Activated naive CD4-positive, alpha-beta T cell treated with anti-CD3 and anti-CD28 coated beads, Interleukin-2, amount 10 ng/mL, durations not matched to agents 7 days and 5 days (primary cell): ENCODE measurements at regions of chr16 and their contacts with region 1.

Region 1: DNA sequence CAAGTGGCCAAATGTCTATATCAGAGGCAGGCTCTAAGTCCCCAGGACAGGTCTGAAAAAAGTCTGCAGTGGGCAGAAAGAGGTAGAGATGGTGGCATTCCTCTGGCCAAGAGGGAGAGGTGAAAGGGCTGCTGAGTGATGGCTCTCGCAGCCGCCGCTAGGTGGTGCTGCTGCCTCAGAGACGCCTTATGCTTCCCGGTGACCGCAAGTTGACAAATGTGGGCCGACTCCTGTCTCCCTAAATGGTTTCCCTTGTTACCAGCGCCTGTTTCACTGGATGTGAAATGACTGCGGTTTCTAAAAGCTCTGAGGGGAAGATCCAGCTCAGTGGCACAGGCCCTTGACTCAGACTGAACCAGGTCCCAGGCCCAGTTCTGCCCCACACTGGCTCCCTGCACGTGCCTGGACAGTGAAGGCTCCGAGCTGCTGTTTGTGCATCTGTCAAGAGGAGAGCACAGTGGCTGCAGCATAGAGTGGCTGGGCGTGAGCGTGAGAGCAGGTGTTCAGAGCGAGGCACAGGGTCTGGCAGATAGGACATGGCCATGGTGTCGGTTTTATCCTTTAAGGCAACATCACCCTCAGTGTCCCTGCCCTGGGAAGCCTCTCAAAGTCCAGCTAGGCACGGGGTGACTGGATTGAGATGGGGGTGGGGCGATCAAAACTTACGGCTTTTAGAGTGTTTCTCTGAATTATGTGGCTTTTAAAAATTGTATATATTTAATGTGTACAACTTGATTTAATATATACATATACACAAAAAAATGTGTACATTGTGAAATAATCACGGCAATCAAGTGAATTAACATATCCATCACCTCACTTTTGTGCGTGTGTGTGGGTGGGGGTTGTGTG is 19.9 kb downstream of the CLEC16A start:
- DNase-seq: peak; percentile 89
- H3K4me3 Mint-ChIP-seq: peak overlapping the region; percentile 36
- H3K27ac Mint-ChIP-seq: peak overlapping the region; percentile 90
- H3K4me1 Mint-ChIP-seq: peaks cover 69% of the 10 kb centered on the region
- H3K27me3 Mint-ChIP-seq: no peaks in the 10 kb centered on the region

Region 2: DNA sequence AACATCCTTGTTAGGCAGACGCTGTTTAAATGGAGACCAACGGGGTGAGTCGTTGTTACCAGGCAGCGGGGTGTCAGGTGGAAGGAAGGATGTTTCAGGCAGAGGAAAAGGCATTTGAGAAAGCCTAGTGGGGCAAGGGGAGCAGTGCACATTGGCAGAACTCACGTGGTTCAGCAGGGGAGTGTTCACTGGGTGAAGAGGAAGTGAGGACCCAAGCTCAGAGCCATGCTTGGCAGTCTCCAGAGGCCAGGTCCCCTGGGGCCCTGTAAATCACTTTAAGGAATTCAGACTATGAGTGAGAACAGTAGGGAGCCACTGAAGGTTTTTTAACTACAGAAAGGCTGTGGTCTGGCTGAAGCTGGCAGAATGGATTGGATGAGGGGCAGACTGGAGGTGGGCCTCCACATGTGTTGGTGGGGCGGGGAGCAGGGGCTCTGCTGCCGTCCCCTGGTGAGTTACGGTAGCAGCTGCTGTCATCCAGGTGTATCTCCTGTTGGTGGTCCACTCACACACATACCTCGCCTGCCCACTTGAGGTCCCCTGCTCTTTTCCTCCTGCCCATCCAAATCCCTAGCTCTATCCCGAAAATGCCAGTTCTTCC is 14.8 kb before region 1 on chr16:
- CTCF ChIA-PET with region 1: interaction called, 37 read pairs
- DNase-seq: peak; percentile 80
- H3K4me3 Mint-ChIP-seq: no peak overlapping the region
- H3K27ac Mint-ChIP-seq: peak overlapping the region; percentile 15
- H3K4me1 Mint-ChIP-seq: peaks cover 63% of the 10 kb centered on the region
- H3K27me3 Mint-ChIP-seq: no peaks in the 10 kb centered on the region

Region 3: DNA sequence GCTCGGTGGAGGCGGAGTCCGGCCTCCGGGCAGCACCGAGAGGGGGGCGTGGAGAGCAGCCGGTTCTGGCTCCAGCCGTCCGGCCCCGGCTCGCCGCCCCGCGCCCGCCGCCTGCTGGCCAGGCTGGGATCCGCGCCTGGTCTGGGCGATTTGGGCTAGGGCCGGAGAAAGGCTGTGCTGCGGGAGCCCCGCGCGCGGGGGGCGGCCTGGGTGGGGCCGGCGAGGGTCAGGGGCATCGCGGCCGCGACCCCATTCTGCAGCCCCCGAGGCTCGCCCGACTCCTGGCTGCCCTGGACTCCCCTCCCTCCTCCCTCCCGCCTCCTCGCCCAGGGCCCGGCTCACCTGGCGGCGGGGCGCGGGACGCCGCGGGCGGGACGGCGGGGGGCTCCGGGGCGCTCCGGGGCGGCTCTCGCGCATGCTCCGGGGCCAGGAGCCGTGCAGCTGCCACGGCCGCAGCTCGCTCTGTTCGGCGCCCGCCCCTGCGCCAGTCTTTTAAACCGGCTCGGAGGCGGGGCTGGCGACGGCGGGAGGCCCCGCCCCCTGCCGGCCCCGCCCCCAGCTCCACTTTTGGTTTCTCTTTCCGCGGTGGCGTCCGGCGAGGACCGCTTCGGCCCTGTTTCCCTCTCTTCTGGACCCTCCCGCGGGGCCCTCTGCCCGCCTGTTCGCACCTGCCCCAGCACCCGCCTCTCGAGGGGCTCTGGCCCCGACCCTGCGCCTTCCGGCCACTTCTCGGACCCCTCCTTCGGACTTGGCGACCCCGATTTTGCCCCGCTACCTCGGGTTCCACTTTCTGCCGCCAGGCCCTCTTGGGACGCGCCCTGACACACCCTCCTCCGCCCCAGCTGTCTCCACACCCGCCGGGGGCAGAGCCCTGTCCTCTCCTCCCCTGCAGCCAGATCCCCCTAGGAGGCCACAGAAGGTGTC is 291.7 kb after region 1 on chr16 and contains the start of gene SOCS1:
- CTCF ChIA-PET with region 1: interaction called, 95 read pairs
- DNase-seq: peak; percentile 89
- H3K4me3 Mint-ChIP-seq: peak within 1 kb of the TSS; percentile 98
- H3K27ac Mint-ChIP-seq: peak within 1 kb of the TSS; percentile 94
- H3K4me1 Mint-ChIP-seq: peaks cover 59% of the 10 kb centered on the region
- H3K27me3 Mint-ChIP-seq: peaks cover 10% of the 10 kb centered on the region

Region 4: DNA sequence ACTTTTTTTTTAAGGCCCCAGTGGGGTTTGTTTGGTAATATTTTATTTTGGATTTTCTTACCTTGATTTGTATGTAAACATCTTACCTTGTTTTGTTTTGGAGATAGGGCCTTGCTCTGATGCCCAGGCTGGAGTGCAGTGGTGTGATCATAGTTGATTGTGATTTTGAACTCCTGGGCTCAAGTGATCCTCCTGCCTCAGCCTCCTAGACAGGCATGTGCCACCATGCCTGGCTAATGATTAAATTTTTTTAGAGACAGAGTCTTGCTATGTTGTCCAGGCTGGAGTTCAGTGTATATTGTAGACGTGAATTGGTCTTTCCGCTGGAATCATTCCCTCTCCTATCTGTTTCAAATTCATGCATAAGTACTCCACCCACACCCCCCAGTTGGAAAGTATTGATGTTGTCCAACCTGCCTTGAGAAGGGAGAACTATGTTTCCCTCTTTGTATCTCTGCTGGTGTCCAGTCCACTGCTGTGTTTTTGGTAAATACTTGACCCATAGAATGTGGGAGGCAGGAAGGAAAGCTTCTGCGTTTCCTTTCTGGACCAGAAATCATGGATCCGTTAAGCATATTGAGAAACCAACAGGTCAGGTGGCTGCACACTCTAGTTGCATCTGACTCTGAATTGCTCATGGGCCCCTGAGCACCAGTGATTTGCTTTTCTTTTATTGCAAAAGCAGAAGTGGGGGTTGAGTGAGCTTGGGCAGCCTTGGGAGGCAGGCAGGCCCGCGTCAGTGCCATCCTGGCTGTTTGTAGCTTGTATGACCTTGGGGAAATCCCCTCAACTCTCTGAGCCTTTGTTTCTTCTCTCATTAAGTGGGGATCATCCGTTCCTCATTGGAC is 406.0 kb after region 1 on chr16:
- CTCF ChIA-PET with region 1: interaction called, 29 read pairs
- DNase-seq: peak; percentile 34
- H3K4me3 Mint-ChIP-seq: no peak overlapping the region
- H3K27ac Mint-ChIP-seq: no peak overlapping the region
- H3K4me1 Mint-ChIP-seq: peaks cover 22% of the 10 kb centered on the region
- H3K27me3 Mint-ChIP-seq: peaks cover 20% of the 10 kb centered on the region

Region 5: GRCh38 chr16:11530171-11530940 is 566.1 kb after region 1 on chr16:
- CTCF ChIA-PET with region 1: interaction called, 28 read pairs
- DNase-seq: no peak
- H3K4me3 Mint-ChIP-seq: no peak overlapping the region
- H3K27ac Mint-ChIP-seq: no peak overlapping the region
- H3K4me1 Mint-ChIP-seq: peaks cover 7% of the 10 kb centered on the region
- H3K27me3 Mint-ChIP-seq: peaks cover 26% of the 10 kb centered on the region